ENCODE measurements at regions of chr5 and their contacts with region 1.

Region 1: DNA sequence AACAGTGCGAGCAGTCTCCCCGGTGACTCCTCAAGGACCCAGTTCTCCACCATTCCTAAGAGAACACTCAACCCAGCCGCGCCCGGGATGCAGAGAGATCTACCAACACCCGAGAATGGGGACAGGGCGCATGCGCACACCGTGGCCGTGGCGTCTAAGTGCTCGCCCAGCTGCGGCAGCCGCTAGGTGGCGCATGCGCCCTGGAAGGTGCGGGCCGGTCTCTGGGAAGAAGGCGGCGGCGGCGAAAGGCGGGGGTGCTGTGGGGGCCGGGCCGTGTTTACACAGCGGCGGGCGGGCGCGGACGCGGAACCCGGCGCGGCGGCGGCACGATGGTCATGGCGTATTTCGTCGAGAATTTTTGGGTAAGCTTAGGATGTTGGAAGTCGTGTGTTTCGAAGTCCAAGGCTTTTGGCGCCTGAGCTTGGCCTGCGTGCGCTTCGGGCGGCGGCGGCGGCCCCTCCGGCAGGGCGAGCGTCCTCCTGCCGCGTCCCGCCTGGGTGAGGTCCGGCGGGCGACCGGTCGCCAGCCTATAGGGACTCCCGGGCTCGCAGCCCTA is at the start of gene FCHO2:
- DNase-seq: peak; percentile 95
- H3K4me3 ChIP-seq: peak within 1 kb of the TSS; percentile 69 to 96 (median 92)
- H3K27ac ChIP-seq: peak within 1 kb of the TSS; percentile 93
- H3K4me1 ChIP-seq: peaks cover 50% of the 10 kb centered on the region
- H3K27me3 ChIP-seq: no peaks in the 10 kb centered on the region
- CTCF ChIP-seq: peak; percentile 78 to 88
- POLR2A ChIP-seq: peak; percentile 61
- total RNA-seq, gene FCHO2: 23.7 and 25.2 TPM in 2 replicates

Region 2: GRCh38 chr5:72556351-72557166 is 399.3 kb before region 1 on chr5:
- CTCF ChIA-PET with region 1: no interaction called
- POLR2A ChIA-PET with region 1: no interaction called
- dilution Hi-C with region 1: no loop called
- intact Hi-C with region 1: no loop called
- DNase-seq: peak; percentile 85
- H3K4me3 ChIP-seq: peak overlapping the region in 1 of 3 experiments; percentile 4
- H3K27ac ChIP-seq: peak overlapping the region; percentile 97
- H3K4me1 ChIP-seq: peaks cover 83% of the 10 kb centered on the region
- H3K27me3 ChIP-seq: no peaks in the 10 kb centered on the region
- CTCF ChIP-seq: no peak
- POLR2A ChIP-seq: peak; percentile 92

Region 3: GRCh38 chr5:72920690-72921502 is 35.0 kb before region 1 on chr5:
- CTCF ChIA-PET with region 1: interaction called, 11 read pairs
- POLR2A ChIA-PET with region 1: no interaction called
- dilution Hi-C with region 1: no loop called
- intact Hi-C with region 1: loop called (anchors 2 kb)
- DNase-seq: peak; percentile 62
- H3K4me3 ChIP-seq: no peak overlapping the region
- H3K27ac ChIP-seq: no peak overlapping the region
- H3K4me1 ChIP-seq: no peaks in the 10 kb centered on the region
- H3K27me3 ChIP-seq: no peaks in the 10 kb centered on the region
- CTCF ChIP-seq: peak in 1 of 2 donors; percentile 5
- POLR2A ChIP-seq: no peak

Region 4: DNA sequence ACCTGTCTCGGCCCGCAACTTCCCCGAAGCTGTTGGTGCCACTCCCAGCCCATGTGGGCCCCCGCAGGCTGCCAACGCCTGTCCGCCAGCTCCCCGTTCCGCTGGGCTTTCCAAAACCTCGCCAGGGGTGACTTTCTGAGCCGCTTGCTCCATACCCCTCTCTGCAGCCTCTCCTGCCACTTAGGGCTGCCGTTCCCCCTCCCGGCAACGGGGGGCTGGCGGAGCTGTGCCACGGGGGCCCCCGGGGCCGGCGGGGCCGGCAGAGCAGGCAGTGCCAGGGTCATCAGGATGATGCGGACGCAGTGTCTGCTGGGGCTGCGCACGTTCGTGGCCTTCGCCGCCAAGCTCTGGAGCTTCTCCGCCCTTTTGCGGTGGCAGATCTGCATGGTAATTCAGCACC is 40.8 kb after region 1 on chr5:
- CTCF ChIA-PET with region 1: no interaction called
- POLR2A ChIA-PET with region 1: no interaction called
- dilution Hi-C with region 1: no loop called
- intact Hi-C with region 1: no loop called
- DNase-seq: no peak
- H3K4me3 ChIP-seq: no peak overlapping the region
- H3K27ac ChIP-seq: no peak overlapping the region
- H3K4me1 ChIP-seq: no peaks in the 10 kb centered on the region
- H3K27me3 ChIP-seq: no peaks in the 10 kb centered on the region
- CTCF ChIP-seq: no peak
- POLR2A ChIP-seq: no peak

Region 5: DNA sequence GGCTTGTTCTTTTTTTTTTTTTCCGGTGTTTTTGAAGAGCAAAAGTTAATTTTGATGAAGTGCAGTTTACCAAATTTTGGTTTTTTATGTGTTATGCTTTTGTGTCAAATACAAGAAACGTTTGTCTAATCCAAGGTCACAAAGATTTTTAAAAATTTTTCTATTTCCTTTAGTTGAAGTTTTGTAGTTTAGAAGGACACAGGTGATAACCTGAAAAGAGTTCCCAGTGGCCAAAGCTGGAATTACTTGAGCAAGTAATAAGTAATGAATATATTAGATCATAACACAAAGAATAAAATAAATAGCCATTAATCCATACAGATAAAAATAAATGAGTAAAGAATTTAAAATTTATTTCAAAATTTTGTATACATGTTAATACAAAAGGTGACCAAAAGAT is 71.5 kb after region 1 on chr5:
- CTCF ChIA-PET with region 1: interaction called, 4 read pairs
- POLR2A ChIA-PET with region 1: no interaction called
- dilution Hi-C with region 1: no loop called
- intact Hi-C with region 1: loop called (anchors 1 kb)
- DNase-seq: no peak
- H3K4me3 ChIP-seq: no peak overlapping the region
- H3K27ac ChIP-seq: no peak overlapping the region
- H3K4me1 ChIP-seq: peaks cover 16% of the 10 kb centered on the region
- H3K27me3 ChIP-seq: no peaks in the 10 kb centered on the region
- CTCF ChIP-seq: no peak
- POLR2A ChIP-seq: no peak

Region 6: GRCh38 chr5:73088026-73088425 is 132.2 kb after region 1 on chr5:
- CTCF ChIA-PET with region 1: interaction called, 4 read pairs
- POLR2A ChIA-PET with region 1: no interaction called
- dilution Hi-C with region 1: no loop called
- intact Hi-C with region 1: loop called (anchors 1 kb)
- DNase-seq: no peak
- H3K4me3 ChIP-seq: no peak overlapping the region
- H3K27ac ChIP-seq: no peak overlapping the region
- H3K4me1 ChIP-seq: no peaks in the 10 kb centered on the region
- H3K27me3 ChIP-seq: no peaks in the 10 kb centered on the region
- CTCF ChIP-seq: no peak
- POLR2A ChIP-seq: no peak

Region 7: GRCh38 chr5:73120222-73121118 is 164.6 kb after region 1 on chr5 and contains the start of gene TMEM171:
- CTCF ChIA-PET with region 1: no interaction called
- POLR2A ChIA-PET with region 1: no interaction called
- dilution Hi-C with region 1: no loop called
- intact Hi-C with region 1: loop called (anchors 5 kb)
- DNase-seq: peak; percentile 37
- H3K4me3 ChIP-seq: peak within 1 kb of the TSS; percentile 39 to 95 (median 86)
- H3K27ac ChIP-seq: no peak within 1 kb of the TSS
- H3K4me1 ChIP-seq: peaks cover 32% of the 10 kb centered on the region
- H3K27me3 ChIP-seq: no peaks in the 10 kb centered on the region
- CTCF ChIP-seq: no peak
- POLR2A ChIP-seq: peak; percentile 65
- total RNA-seq, gene TMEM171: 5.0 and 5.6 TPM in 2 replicates

Region 8: DNA sequence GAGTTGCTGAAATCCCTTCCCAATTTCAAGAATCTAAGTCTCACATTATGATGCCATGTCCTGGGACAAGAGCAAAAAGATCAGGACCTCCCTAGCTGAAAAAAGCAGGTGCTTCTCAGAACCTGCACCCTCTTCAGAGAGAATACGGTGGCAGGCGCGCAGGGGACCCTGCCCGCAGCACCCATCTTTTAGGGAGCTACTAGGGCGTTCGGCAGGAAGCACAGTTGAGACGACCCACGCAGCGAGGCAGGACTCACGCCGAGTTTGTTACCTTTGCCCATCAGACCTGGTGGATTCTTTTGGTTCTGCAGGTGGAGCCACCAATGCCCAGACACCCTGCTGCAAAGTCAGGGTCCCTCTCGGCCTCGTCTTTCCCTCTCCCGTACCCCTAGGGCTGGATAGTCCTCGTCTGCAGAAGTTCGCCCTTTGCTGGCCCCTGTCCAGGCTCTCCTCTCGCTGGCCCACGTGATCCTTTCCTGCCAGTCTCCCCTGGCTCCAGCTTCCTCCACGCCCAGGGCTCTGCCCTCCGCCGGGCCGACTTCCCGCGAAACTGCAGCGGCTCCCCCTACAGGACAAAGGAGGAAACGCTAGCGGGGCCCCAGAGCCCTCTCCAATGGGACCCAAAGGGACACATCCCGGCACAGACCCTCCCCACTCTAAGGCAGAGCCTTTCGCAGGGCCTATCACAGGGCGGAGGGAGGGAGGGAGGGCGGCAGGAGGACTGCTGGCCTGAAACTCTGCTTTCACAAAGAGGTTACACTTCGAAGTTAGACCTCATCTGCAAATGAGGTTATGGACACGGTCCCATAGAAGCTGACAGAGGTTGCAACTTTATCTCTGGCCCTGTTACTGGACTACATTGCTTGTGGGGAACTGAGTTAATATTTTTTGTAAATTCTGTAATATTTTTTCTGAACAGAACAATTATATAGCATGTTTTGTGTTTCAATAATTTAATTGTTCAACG is 246.0 kb after region 1 on chr5:
- CTCF ChIA-PET with region 1: interaction called, 5 read pairs
- POLR2A ChIA-PET with region 1: no interaction called
- dilution Hi-C with region 1: no loop called
- intact Hi-C with region 1: loop called (anchors 2 kb)
- DNase-seq: peak; percentile 60
- H3K4me3 ChIP-seq: no peak overlapping the region
- H3K27ac ChIP-seq: no peak overlapping the region
- H3K4me1 ChIP-seq: no peaks in the 10 kb centered on the region
- H3K27me3 ChIP-seq: peaks cover 29 to 30% of the 10 kb centered on the region in 2 experiments
- CTCF ChIP-seq: peak; percentile 78 to 91
- POLR2A ChIP-seq: no peak

Region 9: DNA sequence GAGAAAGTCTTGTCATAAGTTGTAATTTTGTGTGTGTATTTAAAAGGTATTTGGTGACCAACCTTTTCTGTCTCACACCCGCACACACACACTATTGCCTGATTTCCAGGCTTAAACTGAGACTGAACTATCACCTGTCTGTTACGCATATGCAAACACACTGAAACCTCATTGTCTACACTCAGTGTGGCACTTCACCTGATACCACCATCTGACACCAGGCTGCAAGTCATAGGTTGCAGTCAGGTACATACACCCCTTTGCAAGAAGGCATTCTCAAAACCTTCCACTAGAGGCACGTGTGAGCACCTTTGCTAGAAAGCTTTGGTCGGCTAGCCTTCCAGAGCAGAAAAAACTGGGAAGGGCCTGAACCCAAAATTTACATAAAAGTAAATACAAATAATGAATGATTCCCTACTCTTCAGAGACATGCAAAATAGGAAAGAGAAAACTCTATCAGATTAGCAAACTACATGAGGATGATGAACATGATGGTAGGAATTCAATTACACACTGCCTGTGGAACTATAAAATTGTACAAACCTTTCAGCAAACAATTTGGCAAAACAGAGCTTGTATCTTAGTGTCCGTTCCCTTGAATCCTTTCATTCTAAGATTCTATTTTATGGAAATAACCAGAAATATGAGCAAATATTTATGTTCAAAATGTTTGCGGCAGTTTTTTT is 498.6 kb after region 1 on chr5:
- CTCF ChIA-PET with region 1: interaction called, 6 read pairs
- POLR2A ChIA-PET with region 1: no interaction called
- dilution Hi-C with region 1: no loop called
- intact Hi-C with region 1: loop called (anchors 5 kb)
- DNase-seq: peak; percentile 66
- H3K4me3 ChIP-seq: no peak overlapping the region
- H3K27ac ChIP-seq: no peak overlapping the region
- H3K4me1 ChIP-seq: no peaks in the 10 kb centered on the region
- H3K27me3 ChIP-seq: peaks cover 59 to 78% of the 10 kb centered on the region in 2 experiments
- CTCF ChIP-seq: peak; percentile 68 to 74
- POLR2A ChIP-seq: no peak

Measured in endothelial cell of umbilical vein (primary cell).